ENCODE measurements at regions of chr9 and their contacts with region 1.

Region 1: DNA sequence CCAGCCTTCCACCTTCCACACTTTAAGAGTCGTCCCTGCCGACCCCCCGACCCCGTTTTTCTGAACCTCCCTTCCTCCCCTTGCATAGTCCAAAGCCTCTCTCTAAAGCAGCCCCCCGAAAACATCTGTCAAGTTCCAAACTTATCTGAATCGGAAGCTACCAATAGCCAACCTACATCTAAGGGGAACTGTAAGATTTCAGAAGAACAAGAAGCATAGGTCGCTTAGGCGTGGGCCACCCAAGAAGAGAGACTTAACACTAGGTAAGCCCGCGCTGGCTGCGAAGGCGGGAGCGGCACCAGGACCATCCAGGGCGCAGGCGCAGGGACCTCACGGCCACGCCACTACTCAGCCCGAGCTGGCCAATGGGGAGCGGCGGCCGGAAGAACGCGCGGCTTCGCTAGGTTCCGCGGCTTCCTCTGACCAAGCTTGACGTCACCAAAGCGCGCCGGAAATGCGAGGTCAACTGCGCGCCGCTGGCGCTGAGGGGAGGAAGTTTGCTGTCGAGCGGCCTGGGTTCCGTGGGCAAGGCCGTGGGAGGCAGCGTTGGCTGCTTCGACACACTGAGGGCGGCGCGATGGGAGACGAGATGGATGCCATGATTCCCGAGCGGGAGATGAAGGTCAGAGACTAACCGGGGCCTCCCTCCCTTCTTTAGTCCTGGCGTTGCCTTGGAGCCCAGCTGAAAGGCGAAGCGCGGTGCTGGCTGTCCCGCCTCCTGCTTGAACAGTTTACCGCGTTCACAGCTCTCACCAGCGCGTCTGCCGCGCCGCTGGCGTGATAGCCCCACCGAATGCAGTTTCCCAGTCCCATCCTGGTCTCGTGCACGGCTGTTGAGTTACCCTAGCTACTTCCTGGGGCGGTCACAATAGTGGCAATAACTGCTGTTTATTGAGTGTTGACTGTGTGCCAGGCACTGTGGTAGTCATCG is at the start of gene NUP214:
- DNase-seq: peak; percentile 99
- ATAC-seq: peak; percentile 99
- H3K4me3 Mint-ChIP-seq: peak within 1 kb of the TSS; percentile 91
- H3K27ac Mint-ChIP-seq: peak within 1 kb of the TSS; percentile 95
- H3K4me1 Mint-ChIP-seq: peaks cover 31% of the 10 kb centered on the region
- H3K27me3 Mint-ChIP-seq: no peaks in the 10 kb centered on the region
- CTCF ChIP-seq: no peak
- total RNA-seq, gene NUP214: 57.6 to 58.3 TPM

Region 2: DNA sequence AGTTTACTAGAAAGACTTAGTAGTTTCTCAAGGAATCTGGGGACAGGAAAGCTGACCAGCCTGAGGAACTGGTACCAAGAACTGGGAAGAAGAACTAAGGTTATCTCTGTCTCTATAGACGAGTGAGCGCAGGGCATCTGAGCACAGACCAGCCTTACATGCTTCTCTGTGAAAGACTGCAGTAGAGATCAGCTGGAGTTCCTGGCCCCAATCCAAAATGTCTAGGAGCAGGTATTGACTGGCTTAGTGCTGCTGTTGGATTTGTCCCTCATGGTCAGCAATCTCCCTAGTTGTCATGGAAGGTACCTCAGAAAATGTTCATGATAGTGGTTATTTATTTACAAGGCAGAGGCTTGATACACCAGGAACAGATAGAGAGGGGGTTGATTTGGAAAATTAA is 13.3 kb after region 1 on chr9:
- CTCF ChIA-PET with region 1: no interaction called
- POLR2A ChIA-PET with region 1: interaction called, 14 read pairs
- intact Hi-C with region 1: no loop called
- DNase-seq: no peak
- ATAC-seq: no peak
- H3K4me3 Mint-ChIP-seq: no peak overlapping the region
- H3K27ac Mint-ChIP-seq: no peak overlapping the region
- H3K4me1 Mint-ChIP-seq: peaks cover 2% of the 10 kb centered on the region
- H3K27me3 Mint-ChIP-seq: no peaks in the 10 kb centered on the region
- CTCF ChIP-seq: no peak

Region 3: GRCh38 chr9:131160416-131161112 is 35.2 kb after region 1 on chr9:
- CTCF ChIA-PET with region 1: no interaction called
- POLR2A ChIA-PET with region 1: interaction called, 10 read pairs
- intact Hi-C with region 1: no loop called
- DNase-seq: no peak
- ATAC-seq: no peak
- H3K4me3 Mint-ChIP-seq: no peak overlapping the region
- H3K27ac Mint-ChIP-seq: no peak overlapping the region
- H3K4me1 Mint-ChIP-seq: no peaks in the 10 kb centered on the region
- H3K27me3 Mint-ChIP-seq: no peaks in the 10 kb centered on the region
- CTCF ChIP-seq: no peak